Right ventricle myocardium inferior (tissue), 1 donor: ENCODE measurements at regions of chr3 and their contacts with region 1.

Region 1: DNA sequence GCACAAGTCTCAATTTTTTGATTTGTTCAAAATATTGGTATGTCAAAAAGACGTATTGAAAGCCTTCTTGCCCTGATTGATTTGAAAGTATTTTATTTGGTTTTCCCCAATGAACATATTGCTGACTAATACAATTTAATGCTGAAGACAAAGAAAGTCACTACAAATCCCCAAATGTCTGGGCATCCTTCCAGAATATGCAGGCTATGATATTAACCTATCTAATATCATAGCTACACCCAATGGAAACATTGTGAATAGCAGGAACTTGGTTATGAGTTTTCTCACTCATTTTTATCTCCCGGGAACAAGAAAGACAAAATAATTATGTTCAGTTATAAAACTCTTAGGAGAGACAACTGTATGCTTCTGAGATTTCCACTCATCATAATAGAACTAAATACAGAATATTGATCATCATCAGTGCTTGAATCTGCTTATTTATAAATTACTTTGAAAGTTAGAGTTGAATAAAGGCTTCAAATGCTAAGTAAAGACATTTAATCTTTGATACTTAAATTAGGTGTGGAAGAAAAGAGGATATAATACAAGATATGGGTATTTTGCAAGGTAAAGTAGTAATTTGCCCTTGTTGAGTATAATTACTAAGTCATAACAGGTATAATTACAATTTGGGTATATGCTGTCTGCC is 483.9 kb downstream of the RBMS3 start:
- DNase-seq: no peak
- ATAC-seq: peak; percentile 65

Region 2: DNA sequence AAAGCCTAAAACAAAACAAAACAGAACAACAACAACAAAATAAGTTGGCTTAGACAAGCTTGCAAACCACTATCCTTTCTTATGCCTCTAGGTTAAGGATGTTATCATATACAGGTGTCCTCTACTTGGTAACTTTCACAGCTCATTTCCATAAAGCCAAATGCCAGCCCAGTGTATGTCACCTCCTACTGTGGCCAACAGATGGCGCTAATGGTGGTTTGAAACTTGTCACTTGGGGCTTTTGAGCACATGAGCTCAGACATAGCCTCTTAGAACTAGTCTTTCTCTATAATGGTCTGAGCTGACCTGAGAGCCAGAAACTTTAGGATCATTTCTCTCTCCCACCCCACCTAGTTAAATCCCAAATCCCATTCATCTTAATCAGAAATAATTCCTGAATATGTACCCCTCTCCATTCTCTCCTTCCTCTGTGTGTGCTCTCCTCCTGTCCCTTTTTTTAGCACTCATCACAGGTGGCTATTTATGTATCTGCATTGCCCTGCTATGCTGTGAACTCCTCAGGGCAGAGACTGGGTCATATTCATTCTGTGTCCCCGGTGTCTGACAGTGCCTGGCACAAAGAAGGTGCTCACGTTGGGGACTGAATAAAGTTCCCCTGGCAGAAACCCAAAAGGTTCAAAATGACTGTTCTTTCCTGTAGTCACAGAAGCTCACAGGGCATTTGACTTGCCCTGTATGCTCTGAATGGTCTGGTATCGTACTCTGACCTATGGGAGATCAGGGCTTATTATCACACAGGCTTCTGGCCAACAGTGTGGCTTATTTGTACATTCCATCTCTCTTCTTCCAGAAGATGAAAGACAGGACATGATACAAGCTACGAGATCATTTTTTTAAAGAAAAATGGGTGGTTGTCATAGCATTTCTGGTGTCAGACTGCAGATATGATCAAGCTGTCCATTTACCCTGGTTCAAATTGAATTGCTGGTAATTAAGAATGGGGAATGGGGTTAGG is 1096.8 kb before region 1 on chr3:
- intact Hi-C with region 1: loop called (anchors 5 kb)
- DNase-seq: peak; percentile 70
- ATAC-seq: peak; percentile 93

Region 3: GRCh38 chr3:28916713-28917499 is 847.8 kb before region 1 on chr3:
- intact Hi-C with region 1: loop called (anchors 2 kb)
- DNase-seq: peak; percentile 74
- ATAC-seq: peak; percentile 95

Region 4: DNA sequence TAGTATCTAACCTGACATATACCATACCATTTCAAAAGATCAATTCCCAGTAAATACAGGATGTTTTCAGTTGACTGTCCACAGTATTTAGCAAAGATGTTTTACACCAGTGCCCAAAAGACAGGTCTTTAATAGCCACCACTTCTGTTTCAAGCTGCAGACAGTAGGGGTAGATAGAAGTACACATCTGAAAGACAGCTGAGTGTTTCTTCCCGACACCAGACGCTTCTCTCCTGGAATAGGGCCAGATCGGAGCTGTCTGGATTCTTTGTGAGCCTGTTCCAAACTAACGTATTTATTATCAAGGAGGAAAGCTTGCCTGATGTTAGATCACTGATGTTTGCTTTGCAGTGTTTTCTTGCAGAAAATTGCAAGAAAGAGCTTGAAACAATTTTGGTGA is 619.9 kb before region 1 on chr3:
- intact Hi-C with region 1: loop called (anchors 5 kb)
- DNase-seq: no peak
- ATAC-seq: peak; percentile 59

Region 5: DNA sequence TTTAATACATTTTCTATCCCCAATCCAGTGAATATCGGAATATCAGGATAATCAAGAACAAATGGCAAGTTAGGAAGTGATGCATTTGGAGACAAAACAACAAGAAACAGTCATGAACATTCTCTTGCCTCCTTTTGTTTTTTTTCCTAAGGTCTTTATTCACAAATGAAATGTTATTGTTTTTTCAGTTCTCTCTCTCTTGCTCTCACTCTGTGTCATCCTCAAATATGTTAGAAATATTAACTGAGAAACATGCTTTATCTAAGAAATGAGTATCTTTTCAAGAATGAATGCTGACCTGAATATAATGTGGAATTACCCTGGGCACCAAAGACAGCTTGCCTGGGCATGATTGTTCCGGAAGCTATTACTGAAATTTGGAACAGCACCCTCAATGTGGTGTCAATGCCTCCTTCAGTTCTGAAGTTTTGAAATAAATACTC is 432.5 kb before region 1 on chr3:
- intact Hi-C with region 1: loop called (anchors 5 kb)
- DNase-seq: no peak
- ATAC-seq: no peak

Region 6: DNA sequence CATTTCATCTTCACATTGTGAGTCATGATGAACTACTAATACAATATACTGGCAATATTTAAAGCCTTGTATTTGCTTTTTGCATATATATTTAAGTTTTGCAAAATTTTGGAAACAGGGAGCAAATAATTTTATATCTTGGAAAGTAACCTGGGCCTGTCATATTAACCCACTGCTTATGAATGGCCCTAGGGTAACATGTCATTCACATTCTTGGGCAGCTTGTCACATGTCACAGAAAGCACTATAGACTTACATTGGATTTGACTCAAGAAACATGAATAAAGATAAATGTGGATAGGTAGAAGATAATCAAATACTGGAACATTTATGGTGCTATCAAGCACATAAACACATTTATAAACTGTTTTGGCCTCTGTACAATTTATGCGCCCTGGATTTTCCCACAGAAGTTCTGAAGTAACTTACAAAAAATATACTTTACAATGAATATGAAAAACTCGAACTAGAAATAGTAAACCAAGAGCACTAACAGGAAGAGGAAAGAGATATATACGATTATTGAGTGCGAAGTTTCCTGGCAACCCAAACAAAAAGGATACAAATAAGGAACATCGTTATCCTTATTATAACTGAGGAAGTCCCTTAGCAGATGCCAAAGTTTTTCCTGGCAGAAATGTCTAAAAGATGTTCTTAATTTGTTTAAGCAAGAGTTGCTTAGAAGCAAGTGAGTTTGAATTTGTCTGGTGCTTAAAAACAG is 226.7 kb before region 1 on chr3:
- intact Hi-C with region 1: loop called (anchors 5 kb)
- DNase-seq: no peak
- ATAC-seq: no peak

Region 7: DNA sequence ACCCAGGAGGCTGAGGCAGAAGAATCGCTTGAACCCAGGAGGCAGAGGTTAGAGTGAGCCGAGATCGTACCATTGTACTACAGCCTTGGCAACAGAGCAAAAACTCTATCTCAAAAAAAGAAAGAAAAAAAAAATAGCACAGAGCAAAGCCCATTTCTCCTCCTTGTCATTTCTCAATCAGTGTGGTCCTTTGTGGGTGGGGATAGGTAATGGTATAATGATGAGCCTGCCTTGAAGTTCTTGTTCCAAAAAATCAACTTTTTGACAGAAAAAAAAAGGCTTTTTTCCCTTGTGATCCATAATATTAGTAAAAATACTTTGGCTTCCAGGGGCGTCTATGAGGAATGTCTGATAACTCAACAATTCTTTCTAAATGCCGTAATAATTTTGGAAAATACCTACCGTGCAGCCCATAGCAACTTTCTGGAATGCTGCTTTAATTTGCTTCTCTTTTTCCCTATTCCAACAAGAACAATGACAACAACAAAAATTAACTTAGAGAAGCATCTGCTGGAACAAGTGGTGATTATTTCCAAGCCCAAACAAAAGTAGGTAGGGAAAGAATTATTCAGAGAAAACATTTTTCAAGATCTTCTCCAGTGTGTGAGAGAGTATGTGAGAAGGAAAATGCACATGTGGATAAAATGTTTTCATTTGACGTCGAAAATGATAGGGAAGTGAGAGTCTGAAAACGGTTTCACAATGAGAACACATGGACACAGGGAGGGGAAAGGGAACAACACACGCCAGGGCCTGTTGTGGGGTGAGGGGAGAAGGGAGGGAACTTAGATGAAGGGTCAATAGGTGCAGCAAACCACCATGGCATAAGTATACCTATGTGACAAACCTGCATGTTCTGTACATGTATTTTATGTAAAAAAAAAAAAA is 146.1 kb before region 1 on chr3:
- intact Hi-C with region 1: no loop called
- DNase-seq: no peak
- ATAC-seq: peak; percentile 72

Region 8: GRCh38 chr3:29693863-29694262 is 70.9 kb before region 1 on chr3:
- intact Hi-C with region 1: loop called (anchors 5 kb)
- DNase-seq: no peak
- ATAC-seq: no peak

Region 9: DNA sequence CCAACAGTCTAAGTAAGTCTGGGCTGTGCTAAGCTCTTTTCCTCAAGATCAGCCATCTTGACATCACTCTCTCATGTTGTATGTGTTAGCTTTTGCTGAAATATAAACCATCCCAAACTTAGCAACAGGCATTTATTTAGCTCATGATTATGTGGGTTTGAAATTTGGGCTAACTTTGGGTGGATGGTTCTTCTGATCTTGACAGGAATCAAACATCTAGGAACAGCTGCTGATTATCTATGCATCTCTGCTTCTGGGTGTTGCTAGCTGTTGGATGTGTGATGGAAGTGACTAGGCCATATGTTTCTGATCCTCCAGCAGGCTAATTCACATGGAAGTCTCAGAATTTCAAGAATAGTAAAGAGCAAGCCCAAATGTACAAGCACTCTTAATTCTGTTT is 226.5 kb after region 1 on chr3:
- intact Hi-C with region 1: no loop called
- DNase-seq: no peak
- ATAC-seq: no peak